ENCODE measurements at regions of chr19 and their contacts with region 1.

Region 1: GRCh38 chr19:35495107-35496064 is 5.1 kb upstream of the KRTDAP start:
- DNase-seq: peak; percentile 44
- H3K4me3 ChIP-seq: no peak overlapping the region
- H3K27ac ChIP-seq: no peak overlapping the region
- H3K4me1 ChIP-seq: no peaks in the 10 kb centered on the region
- H3K27me3 ChIP-seq: no peaks in the 10 kb centered on the region
- CTCF ChIP-seq: peak; percentile 82 to 98
- POLR2A ChIP-seq: no peak

Region 2: DNA sequence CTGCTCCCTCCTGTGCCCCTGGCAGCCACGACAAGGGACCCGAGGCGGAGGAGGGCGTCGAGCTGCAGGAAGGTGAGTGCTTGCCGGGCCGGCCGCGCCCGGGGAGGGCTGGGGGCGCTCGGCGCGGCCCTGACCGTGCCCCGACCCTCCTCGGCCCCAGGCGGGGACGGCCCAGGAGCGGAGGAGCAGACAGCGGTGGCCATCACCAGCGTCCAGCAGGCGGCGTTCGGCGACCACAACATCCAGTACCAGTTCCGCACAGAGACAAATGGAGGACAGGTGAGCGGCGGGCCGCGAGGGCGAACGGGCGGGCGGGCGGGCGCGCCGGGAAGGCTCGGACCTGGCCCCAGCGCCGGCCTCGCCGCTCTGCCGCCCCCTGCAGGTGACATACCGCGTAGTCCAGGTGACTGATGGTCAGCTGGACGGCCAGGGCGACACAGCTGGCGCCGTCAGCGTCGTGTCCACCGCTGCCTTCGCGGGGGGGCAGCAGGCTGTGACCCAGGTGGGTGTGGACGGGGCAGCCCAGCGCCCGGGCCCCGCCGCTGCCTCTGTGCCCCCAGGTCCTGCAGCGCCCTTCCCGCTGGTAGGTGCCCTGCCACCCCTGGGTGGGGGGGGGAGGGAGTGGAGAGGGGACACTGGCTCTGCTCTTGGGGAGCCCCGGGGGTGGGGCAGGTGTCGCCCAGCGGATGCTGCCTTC is 225.8 kb before region 1 on chr19:
- CTCF ChIA-PET with region 1: interaction called, 8 read pairs
- POLR2A ChIA-PET with region 1: no interaction called
- dilution Hi-C with region 1: no loop called
- intact Hi-C with region 1: loop called (anchors 1 kb)
- DNase-seq: peak; percentile 71
- H3K4me3 ChIP-seq: peak overlapping the region in 2 of 3 experiments; percentile 52 to 53
- H3K27ac ChIP-seq: no peak overlapping the region
- H3K4me1 ChIP-seq: peaks cover 4% of the 10 kb centered on the region
- H3K27me3 ChIP-seq: no peaks in the 10 kb centered on the region
- CTCF ChIP-seq: peak; percentile 20 to 71
- POLR2A ChIP-seq: no peak

Region 3: GRCh38 chr19:35352448-35353304 is 142.7 kb before region 1 on chr19:
- CTCF ChIA-PET with region 1: interaction called, 118 read pairs
- POLR2A ChIA-PET with region 1: no interaction called
- dilution Hi-C with region 1: no loop called
- intact Hi-C with region 1: loop called (anchors 1 kb)
- DNase-seq: peak; percentile 66
- H3K4me3 ChIP-seq: no peak overlapping the region
- H3K27ac ChIP-seq: no peak overlapping the region
- H3K4me1 ChIP-seq: no peaks in the 10 kb centered on the region
- H3K27me3 ChIP-seq: no peaks in the 10 kb centered on the region
- CTCF ChIP-seq: peak; percentile 70 to 76
- POLR2A ChIP-seq: no peak

Region 4: DNA sequence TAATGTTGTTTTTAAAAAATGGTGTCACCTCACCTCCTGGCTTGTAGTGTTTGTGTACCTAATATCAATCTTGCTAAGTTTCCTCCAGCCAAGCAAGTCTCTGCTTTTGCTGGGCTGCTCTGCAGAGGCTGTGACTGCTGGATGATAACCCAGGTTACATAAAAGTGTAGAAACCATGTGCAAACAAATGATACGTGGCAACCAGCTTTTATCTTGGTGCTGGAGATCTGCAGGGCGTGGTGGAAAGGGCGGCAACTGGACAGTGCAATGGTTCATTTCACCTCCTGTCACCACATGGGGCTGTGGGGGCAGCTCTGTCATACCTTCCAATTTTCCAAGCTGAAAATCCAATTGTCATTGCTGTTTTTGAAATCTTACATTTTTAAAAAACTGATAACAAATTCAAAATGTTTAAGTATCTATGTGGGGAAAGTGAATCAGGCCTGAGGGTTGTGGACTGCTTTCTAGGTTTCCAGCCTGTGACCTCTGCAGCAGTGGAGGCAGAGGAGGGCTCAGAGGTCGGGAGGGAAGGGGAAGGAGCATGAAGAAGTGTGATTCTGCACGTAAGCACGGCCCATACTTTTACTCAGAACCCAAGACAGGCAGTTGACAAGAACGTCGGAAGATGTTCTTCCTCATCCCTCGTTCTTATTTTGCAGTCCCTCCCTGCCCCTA is 114.8 kb before region 1 on chr19:
- CTCF ChIA-PET with region 1: no interaction called
- POLR2A ChIA-PET with region 1: no interaction called
- dilution Hi-C with region 1: no loop called
- intact Hi-C with region 1: no loop called
- DNase-seq: no peak
- H3K4me3 ChIP-seq: no peak overlapping the region
- H3K27ac ChIP-seq: no peak overlapping the region
- H3K4me1 ChIP-seq: no peaks in the 10 kb centered on the region
- H3K27me3 ChIP-seq: no peaks in the 10 kb centered on the region
- CTCF ChIP-seq: no peak
- POLR2A ChIP-seq: no peak

Region 5: DNA sequence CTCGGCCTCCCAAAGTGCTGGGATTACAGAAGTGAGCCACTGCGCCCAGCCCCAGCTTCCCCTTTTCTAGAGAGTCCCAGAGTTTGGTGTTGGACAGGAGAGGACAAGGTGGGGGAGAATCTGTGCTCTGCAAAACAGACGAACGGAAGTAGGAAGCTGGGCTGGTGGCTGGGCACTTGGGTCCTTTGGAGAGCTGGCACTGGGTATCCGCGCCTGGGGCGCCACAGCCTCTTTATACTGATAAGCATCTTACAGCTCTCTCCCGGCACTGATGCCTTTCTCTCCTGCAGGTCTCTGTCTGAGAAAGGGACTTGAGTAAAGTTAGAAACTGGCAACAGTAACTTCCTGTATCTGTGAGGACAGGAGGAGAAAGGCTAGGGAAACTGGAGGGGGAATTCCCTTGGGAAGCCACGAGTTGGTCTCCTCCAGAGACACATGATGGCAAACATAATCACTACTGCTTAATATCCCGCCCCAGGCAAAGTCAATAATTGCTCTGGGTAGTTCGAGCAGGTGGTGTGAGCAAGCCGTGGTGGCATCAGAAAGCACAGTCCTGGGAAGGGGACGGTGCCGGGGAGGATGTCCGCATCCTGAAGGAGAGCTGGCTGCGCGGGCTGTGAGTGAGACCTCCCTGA is 46.2 kb before region 1 on chr19:
- CTCF ChIA-PET with region 1: no interaction called
- POLR2A ChIA-PET with region 1: no interaction called
- dilution Hi-C with region 1: no loop called
- intact Hi-C with region 1: no loop called
- DNase-seq: no peak
- H3K4me3 ChIP-seq: no peak overlapping the region
- H3K27ac ChIP-seq: no peak overlapping the region
- H3K4me1 ChIP-seq: no peaks in the 10 kb centered on the region
- H3K27me3 ChIP-seq: no peaks in the 10 kb centered on the region
- CTCF ChIP-seq: no peak
- POLR2A ChIP-seq: no peak

Region 6: GRCh38 chr19:35478803-35479601 is 16.4 kb before region 1 on chr19:
- CTCF ChIA-PET with region 1: interaction called, 12 read pairs
- POLR2A ChIA-PET with region 1: interaction called, 5 read pairs
- dilution Hi-C with region 1: no loop called
- intact Hi-C with region 1: no loop called
- DNase-seq: no peak
- H3K4me3 ChIP-seq: no peak overlapping the region
- H3K27ac ChIP-seq: no peak overlapping the region
- H3K4me1 ChIP-seq: no peaks in the 10 kb centered on the region
- H3K27me3 ChIP-seq: no peaks in the 10 kb centered on the region
- CTCF ChIP-seq: no peak
- POLR2A ChIP-seq: no peak

Region 7: DNA sequence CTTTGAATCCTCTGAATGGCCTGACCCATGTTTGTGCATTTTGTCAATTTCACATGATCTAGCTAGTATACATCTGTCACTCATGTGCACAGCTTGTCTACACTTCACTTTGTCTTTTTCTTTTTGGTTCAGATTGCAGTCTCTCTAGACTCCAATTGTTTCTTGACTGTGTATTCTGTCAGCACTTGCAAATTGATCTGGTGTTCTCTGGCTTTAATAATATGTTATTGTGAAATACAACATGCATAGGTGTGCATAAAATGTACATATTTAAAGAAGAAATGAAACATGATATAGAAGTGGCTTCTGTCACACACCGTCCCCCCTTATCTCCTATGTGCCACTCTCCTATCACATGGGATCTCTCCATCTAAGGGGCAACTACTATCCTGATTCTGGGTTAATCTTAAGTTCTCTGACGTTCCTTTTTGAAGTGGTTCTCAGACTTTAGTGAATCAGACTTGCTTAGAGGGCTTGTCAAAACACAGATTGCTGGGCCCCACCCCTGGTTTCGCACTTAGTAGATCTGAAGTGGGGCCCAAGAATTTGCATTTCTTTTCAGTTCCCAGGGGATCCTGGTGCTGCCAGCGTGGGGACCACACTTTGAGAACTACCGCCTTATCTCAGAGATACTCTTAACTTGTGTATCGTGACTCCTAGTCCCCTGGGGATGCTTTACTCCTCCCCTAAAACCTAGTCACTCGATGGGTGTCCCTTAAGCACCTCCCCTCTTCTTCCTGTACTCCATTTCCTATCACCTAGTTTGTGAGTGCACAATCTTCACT is 10.9 kb before region 1 on chr19:
- CTCF ChIA-PET with region 1: interaction called, 21 read pairs
- POLR2A ChIA-PET with region 1: interaction called, 5 read pairs
- dilution Hi-C with region 1: no loop called
- intact Hi-C with region 1: no loop called
- DNase-seq: no peak
- H3K4me3 ChIP-seq: no peak overlapping the region
- H3K27ac ChIP-seq: no peak overlapping the region
- H3K4me1 ChIP-seq: no peaks in the 10 kb centered on the region
- H3K27me3 ChIP-seq: no peaks in the 10 kb centered on the region
- CTCF ChIP-seq: no peak
- POLR2A ChIP-seq: no peak

Region 8: GRCh38 chr19:35509861-35510625 is 14.7 kb after region 1 on chr19:
- CTCF ChIA-PET with region 1: interaction called, 29 read pairs
- POLR2A ChIA-PET with region 1: no interaction called
- dilution Hi-C with region 1: no loop called
- intact Hi-C with region 1: no loop called
- DNase-seq: peak; percentile 30
- H3K4me3 ChIP-seq: no peak overlapping the region
- H3K27ac ChIP-seq: no peak overlapping the region
- H3K4me1 ChIP-seq: no peaks in the 10 kb centered on the region
- H3K27me3 ChIP-seq: peaks cover 33 to 40% of the 10 kb centered on the region in 2 experiments
- CTCF ChIP-seq: peak; percentile 88 to 94
- POLR2A ChIP-seq: no peak

Region 9: GRCh38 chr19:35533822-35534521 is 38.6 kb after region 1 on chr19:
- CTCF ChIA-PET with region 1: no interaction called
- POLR2A ChIA-PET with region 1: no interaction called
- dilution Hi-C with region 1: no loop called
- intact Hi-C with region 1: no loop called
- DNase-seq: no peak
- H3K4me3 ChIP-seq: no peak overlapping the region
- H3K27ac ChIP-seq: no peak overlapping the region
- H3K4me1 ChIP-seq: no peaks in the 10 kb centered on the region
- H3K27me3 ChIP-seq: peaks cover 11 to 12% of the 10 kb centered on the region in 2 experiments
- CTCF ChIP-seq: no peak
- POLR2A ChIP-seq: no peak

Measured in endothelial cell of umbilical vein (primary cell).